RWPE1 (cell line): ENCODE measurements at regions of chr9 and their contacts with region 1.

Region 1: DNA sequence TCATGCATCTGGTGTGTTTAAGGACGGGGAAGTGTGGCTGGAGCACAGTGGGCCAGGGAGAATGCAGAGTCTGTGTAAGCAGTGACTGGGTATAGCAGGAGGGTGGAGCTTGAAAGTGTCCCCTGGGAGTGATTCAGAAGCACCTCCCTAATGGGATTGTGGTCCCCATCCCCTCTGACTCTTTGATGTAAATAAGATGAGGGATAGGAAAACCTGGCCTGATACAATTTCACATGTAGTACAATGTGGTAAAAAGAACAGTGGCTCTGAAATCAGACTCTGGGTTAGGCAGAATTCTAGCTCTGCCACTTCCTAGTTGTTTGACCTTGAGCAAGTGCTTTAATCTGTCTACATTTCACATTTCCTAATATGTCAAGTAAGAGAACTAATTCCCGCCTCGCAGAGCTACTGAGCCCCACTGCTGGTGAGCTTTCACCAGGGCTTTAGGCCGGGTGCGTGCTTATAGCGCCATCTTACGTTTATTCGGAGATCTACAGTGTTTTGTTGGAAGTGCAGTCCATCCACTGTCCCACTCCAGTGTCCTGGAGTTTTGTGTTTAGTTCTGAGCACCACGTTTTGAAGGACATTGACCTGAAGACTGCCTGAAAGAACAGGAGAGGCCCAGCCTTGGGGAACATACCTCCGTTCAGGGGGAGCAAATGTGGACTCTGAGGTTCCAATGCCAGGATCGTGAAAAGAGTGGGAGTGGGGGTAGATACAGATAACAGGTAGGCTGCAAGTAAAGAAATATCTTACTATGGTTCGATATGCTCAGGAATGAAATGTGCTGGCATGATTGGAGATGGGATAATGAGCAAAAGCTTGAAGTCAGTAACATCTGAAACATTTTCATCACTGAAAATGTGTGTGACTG is 51.2 kb upstream of the TESK1 start:
- DNase-seq: peak; percentile 79
- H3K27ac ChIP-seq: peak overlapping the region; percentile 54
- CTCF ChIP-seq: peak; percentile 99

Region 2: GRCh38 chr9:35484406-35484805 is 69.5 kb before region 1 on chr9:
- CTCF ChIA-PET with region 1: interaction called, 13 read pairs
- POLR2A ChIA-PET with region 1: no interaction called
- DNase-seq: no peak
- H3K27ac ChIP-seq: no peak overlapping the region
- CTCF ChIP-seq: no peak

Region 3: DNA sequence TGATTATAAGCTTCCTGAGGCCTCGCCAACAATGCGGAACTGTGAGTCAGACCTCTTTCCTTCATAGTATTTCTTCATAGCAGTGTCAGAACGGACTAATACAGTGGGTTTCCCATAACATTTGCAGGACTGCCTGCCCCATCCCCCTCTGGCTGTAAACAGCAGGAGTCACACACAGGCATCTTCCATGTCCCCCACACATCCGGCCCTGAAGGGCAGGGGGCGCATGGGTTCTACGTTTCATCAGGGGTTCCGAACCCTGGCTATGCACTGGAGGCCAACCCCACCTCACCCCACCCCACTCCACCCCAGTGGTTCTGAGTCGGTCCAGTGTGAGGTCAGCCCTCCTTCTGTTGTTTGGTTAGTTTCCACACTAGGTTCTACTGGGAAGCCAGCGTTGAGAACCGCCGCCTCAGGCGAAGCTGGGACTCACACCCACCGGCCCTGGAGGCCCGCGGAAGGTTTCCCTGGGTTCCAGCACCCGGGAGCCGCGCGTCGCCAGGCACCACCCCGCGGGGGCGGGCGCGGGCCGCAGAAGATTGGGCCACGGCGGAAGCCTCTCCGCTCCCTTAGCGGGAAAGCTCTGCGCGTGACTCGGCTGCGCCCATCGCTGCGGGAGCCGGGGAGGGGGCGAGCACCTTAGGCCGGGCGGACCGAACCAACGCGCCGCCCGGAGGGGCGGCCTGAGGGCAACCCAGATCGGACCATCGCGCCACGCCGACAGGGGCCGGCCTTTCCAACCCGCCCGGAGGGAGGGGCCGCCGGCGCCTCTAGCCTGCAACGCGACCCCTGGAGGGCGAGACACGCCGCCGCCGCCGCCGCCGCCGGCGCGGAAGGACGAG is 64.4 kb before region 1 on chr9 and contains the start of gene RUSC2:
- CTCF ChIA-PET with region 1: interaction called, 13 read pairs
- POLR2A ChIA-PET with region 1: no interaction called
- DNase-seq: peak; percentile 84
- H3K27ac ChIP-seq: peak within 1 kb of the TSS; percentile 95
- CTCF ChIP-seq: peak; percentile 74